ENCODE measurements at regions of chr18 and their contacts with region 1.

Region 1: GRCh38 chr18:63016270-63016669 is 300.9 kb downstream of the PHLPP1 start:
- DNase-seq: peak; percentile 3
- H3K4me3 ChIP-seq: no peak overlapping the region
- CTCF ChIP-seq: peak; percentile 63

Region 2: DNA sequence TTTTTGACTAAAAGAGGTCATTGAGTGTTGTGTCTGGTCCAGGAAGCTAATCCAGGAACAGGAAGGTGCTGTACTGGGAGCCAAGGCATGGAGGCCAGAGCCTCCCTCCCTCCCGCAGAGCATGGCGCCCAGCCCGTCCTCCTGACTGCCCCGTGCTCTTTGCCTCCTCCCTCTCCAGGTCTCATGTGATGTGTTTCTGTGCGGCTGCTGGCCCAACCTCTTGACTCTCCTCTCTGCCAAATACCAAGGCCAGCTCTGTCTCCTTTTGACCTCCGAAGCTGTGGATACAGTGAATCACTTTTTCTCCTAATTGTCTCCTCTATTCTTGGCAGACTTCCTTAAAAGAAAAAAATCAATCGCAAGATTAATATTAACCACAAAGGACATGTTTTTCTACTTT is 16.9 kb before region 1 on chr18:
- CTCF ChIA-PET with region 1: interaction called, 60 read pairs
- POLR2A ChIA-PET with region 1: no interaction called
- DNase-seq: no peak
- H3K4me3 ChIP-seq: no peak overlapping the region
- CTCF ChIP-seq: no peak

Region 3: DNA sequence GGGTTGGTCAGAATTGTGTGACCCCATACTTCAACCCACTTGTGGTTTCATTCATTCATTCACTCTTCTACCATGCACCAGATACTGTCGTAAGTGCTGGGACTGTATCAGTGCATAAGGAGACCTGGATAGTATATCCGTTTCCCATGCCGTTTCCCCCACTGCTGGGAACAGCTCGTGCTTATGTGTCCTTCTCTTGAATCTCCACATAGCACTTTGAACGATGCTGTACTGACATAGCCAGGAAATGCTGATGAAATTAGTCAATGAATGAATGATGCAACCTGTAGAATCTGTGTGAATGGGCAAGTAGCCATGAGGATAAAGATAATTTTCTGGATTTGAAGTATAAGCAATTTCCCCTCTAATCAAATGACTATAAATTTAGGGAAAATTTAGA is 27.2 kb after region 1 on chr18:
- CTCF ChIA-PET with region 1: interaction called, 21 read pairs
- POLR2A ChIA-PET with region 1: no interaction called
- DNase-seq: no peak
- H3K4me3 ChIP-seq: no peak overlapping the region
- CTCF ChIP-seq: no peak

Region 4: GRCh38 chr18:63320046-63320689 is 303.9 kb after region 1 on chr18:
- CTCF ChIA-PET with region 1: interaction called, 184 read pairs
- POLR2A ChIA-PET with region 1: interaction called, 3 read pairs
- DNase-seq: no peak
- H3K4me3 ChIP-seq: peak overlapping the region; percentile 76
- CTCF ChIP-seq: no peak

Region 5: DNA sequence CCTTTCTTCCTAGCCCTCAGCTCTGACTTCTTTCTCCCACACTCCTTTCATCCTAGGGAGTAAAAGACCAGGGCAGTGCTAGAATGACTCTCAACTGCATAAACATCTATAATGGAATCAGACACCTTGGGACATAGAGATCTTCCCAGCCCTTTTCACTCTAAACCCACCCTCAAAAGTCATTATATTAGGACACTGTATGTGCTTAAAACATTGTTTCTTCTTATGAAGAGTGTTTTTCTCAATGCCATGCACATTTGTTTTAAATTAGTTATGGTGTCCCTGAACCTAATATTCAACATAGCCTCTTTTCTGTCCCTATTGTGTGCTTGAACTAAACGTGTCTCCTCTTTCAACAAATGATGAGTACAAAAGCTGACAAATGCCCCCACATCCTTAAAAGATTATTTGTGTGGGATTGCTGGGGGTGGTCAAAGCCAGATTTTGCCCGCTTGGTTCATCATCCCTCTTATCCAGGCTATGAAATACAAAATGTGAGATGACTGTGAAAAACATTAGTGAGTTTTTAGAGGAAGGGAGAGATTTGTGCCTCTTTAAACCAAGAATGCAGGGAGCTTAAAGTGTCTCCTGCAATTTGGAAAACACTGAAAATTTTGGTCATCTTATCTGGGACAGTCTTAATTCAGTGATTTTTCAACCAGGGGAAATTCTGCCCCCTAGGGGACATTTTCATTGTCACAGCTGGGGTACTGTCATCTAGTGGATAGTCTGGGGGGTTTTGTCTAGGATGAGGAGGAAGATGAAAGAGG is 489.5 kb after region 1 on chr18:
- CTCF ChIA-PET with region 1: interaction called, 28 read pairs
- POLR2A ChIA-PET with region 1: no interaction called
- DNase-seq: no peak
- H3K4me3 ChIP-seq: no peak overlapping the region
- CTCF ChIP-seq: peak; percentile 37